Common myeloid progenitor, CD34-positive (primary cell): ENCODE measurements at regions of chr12 and their contacts with region 1.

Region 1: GRCh38 chr12:108664338-108665258 is 30.9 kb upstream of the SELPLG start:
- DNase-seq: peak; percentile 93 to 97 (median 96)
- H3K4me3 ChIP-seq: peak overlapping the region in 2 of 7 experiments; percentile 0 to 44
- H3K27ac ChIP-seq: peak overlapping the region; percentile 62 to 79
- H3K4me1 ChIP-seq: peaks cover 31 to 44% (median 38%) of the 10 kb centered on the region in 4 experiments
- H3K27me3 ChIP-seq: no peaks in the 10 kb centered on the region

Region 2: DNA sequence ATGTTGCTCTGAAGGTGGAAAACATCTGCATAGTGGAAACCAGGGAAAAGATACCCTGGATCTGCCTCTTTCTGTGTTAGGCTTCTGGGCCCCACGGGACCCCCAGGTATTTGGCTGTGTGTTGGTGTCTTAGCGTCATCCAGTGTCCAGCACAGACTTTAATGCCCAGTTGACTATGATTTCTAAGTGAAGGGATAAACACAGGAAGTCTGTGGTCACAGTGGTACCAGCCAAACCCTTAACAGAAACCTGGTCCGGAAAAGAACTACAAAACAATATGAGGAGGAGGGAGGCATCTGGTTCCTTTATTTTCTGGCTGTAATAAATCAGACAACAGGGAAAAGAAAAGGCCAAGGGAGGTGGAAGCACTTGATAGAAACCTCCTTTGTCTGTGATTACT is 381.9 kb before region 1 on chr12:
- CTCF ChIA-PET with region 1: no interaction called
- POLR2A ChIA-PET with region 1: no interaction called
- DNase-seq: peak; percentile 57 to 93 (median 91)
- H3K4me3 ChIP-seq: peak overlapping the region in 3 of 7 experiments; percentile 19 to 34 (median 33)
- H3K27ac ChIP-seq: no peak overlapping the region
- H3K4me1 ChIP-seq: peaks cover 5 to 37% (median 32%) of the 10 kb centered on the region in 4 experiments
- H3K27me3 ChIP-seq: no peaks in the 10 kb centered on the region

Region 3: GRCh38 chr12:108570743-108571608 is 93.6 kb before region 1 on chr12:
- CTCF ChIA-PET with region 1: interaction called, 24 read pairs
- POLR2A ChIA-PET with region 1: no interaction called
- DNase-seq: peak; percentile 50 to 72 (median 72)
- H3K4me3 ChIP-seq: no peak overlapping the region
- H3K27ac ChIP-seq: no peak overlapping the region
- H3K4me1 ChIP-seq: peaks cover 9 to 28% (median 19%) of the 10 kb centered on the region in 4 experiments
- H3K27me3 ChIP-seq: no peaks in the 10 kb centered on the region

Region 4: DNA sequence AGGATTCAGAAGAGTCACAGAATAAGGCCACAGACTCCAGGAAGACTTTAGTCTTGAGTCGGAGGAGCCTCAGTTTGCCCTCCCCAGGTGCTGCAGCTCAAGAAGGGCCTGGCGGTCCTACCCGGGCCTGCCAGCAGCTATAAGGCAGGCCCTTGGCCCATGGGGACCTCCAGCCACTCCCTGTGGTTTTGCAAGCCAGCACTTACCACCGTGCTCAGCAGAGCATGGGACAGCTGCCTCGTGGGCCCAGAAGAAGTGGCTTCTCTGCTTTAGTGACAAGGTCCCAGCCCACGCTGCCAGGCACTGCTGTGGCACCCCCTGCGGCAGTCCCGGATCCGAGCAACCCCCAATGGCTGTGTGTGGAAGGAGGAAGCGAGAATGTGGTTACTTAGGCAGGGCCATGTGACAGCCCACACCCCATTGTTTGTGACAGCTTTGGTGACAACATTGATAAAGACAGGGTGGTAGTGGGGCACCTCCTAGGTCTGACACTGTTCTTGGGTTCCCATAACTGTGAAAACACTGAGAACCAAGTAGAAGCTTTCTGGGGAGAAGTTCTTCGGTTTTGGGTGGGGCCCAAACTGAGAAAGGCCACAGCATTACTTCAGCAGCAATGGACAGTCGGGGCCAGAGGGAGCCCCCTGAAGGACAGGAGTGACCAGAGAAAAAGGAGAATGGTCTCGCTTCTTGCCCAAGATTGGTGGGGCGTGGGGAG is 30.9 kb before region 1 on chr12 and contains the start of gene SELPLG:
- CTCF ChIA-PET with region 1: interaction called, 13 read pairs
- POLR2A ChIA-PET with region 1: no interaction called
- DNase-seq: peak; percentile 82 to 94 (median 90)
- H3K4me3 ChIP-seq: peak within 1 kb of the TSS in 6 of 7 experiments; percentile 38 to 74 (median 60)
- H3K27ac ChIP-seq: peak within 1 kb of the TSS; percentile 68 to 87
- H3K4me1 ChIP-seq: peaks cover 35 to 98% (median 98%) of the 10 kb centered on the region in 4 experiments
- H3K27me3 ChIP-seq: no peaks in the 10 kb centered on the region

Region 5: DNA sequence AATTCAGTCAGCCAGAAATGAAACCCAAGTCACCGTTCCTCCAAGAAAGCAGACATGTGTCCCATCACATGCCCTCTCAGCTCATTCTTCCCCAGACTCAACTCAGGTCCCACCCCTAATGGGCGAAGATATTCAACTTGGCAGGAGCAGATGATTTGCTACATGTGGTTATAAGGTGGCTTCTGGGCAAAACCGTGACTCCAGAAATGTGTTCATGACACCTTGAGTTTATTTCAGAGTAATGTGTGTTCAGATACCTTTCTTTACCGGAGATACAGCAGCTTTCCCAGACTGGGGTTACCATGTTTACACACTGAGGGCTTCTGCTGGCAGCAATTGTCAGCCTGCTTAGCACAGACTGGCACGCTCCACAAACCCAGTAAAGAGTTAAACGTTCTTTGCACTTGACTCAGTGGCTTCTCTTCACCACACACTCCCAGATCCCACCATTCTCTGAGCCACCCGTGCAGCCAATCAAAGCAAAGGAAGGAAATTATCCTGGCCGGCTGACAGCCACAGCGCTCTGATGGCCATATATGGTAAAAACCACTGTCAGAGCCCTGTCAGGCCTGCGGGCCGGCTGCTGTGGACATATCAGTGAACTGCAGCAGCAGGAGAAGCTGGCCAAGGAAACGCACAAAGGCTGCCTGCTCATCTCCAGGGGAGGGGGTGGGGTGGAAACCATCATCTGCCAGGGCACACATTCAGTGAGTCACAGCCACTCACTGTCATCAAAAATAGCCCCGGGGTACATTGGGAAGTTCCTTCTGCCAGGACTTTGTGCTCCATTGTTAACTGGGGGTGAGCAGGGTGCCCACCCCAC is 26.8 kb after region 1 on chr12:
- CTCF ChIA-PET with region 1: interaction called, 191 read pairs
- POLR2A ChIA-PET with region 1: interaction called, 4 read pairs
- DNase-seq: peak; percentile 95 to 98 (median 98)
- H3K4me3 ChIP-seq: peak overlapping the region in 6 of 7 experiments; percentile 24 to 67 (median 56)
- H3K27ac ChIP-seq: peak overlapping the region; percentile 69 to 85
- H3K4me1 ChIP-seq: peaks cover 39 to 89% (median 76%) of the 10 kb centered on the region in 4 experiments
- H3K27me3 ChIP-seq: no peaks in the 10 kb centered on the region

Region 6: GRCh38 chr12:108714886-108715285 is 50.3 kb after region 1 on chr12:
- CTCF ChIA-PET with region 1: no interaction called
- POLR2A ChIA-PET with region 1: no interaction called
- DNase-seq: no peak
- H3K4me3 ChIP-seq: no peak overlapping the region
- H3K27ac ChIP-seq: no peak overlapping the region
- H3K4me1 ChIP-seq: peaks cover 17 to 45% (median 38%) of the 10 kb centered on the region in 4 experiments
- H3K27me3 ChIP-seq: no peaks in the 10 kb centered on the region

Region 7: DNA sequence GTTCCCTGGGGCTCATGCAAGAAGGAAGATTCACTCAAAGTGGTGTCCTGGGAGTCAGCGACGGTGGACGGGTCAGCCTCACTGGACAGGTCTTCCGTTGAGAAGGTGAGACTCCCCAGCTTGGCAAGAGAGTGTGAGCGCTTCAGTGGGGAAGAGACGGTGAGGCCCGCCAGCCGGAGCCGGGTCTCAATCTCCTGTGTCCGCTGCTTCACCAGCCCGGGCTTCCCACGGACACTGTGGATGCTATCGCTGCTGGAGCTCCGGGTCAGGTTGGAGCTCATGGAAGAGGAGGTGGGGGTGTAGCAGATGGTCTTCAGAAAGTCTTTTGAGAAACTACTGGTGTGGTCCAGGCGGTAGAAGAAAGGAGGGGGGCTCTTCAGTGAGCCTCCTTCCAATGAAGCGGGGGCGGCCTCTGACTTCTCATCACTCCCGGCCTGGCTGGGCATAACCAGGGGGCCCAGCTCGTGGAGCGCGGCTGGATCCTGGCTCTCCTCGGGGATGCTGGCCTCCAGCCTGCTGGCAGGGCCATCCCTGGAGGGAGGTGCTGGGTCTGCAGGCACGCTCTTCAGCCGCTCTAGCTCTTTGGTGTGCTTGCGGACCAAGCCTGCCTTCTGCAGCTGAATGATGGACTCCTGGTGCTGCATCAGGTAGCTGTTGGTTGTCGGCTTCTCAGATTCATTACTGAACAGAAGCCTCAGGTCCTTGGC is 123.6 kb after region 1 on chr12:
- CTCF ChIA-PET with region 1: interaction called, 15 read pairs
- POLR2A ChIA-PET with region 1: no interaction called
- DNase-seq: no peak
- H3K4me3 ChIP-seq: no peak overlapping the region
- H3K27ac ChIP-seq: no peak overlapping the region
- H3K4me1 ChIP-seq: no peaks in the 10 kb centered on the region
- H3K27me3 ChIP-seq: no peaks in the 10 kb centered on the region